Activated CD4-positive, alpha-beta T cell treated with anti-CD3 and anti-CD28 coated beads, Interleukin-2, amount 10 ng/mL, durations not matched to agents 7 days and 5 days (primary cell): ENCODE measurements at regions of chr22 and their contacts with region 1.

Region 1: GRCh38 chr22:22787786-22788459 is 99.7 kb upstream of the IGLL5 start:
- DNase-seq: peak; percentile 78
- H3K4me3 Mint-ChIP-seq: no peak overlapping the region
- H3K27ac Mint-ChIP-seq: no peak overlapping the region
- H3K4me1 Mint-ChIP-seq: peaks cover 41% of the 10 kb centered on the region
- H3K27me3 Mint-ChIP-seq: peaks cover 12% of the 10 kb centered on the region

Region 2: DNA sequence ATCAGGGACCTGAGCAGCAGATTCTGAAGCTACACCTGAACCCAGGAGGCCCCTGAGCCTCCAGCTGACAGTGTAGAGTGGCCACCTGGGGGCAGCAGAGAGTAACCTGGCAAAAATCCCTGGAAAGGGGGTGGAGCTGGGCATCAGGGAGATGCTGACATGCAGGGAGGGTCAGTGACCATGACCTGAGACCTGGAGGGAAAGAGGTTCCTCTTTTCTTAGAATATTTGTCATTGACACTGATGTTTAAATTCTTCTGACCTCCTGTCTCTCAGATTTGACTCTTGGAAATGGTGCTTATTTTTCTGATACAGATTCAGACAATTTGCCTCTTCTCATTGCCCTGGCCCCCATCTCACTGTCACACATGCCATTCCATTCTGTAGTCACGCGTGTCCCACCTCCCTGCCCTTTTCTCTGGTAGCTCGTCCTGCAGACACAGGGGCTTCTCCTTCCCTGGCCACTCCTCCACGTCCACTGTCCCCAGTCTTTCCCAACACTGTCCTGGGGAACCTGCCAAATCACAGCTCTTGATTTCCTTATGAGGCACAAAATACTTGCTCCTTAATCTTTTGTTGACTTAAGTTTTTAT is 17.5 kb before region 1 on chr22:
- CTCF ChIA-PET with region 1: interaction called, 11 read pairs
- POLR2A ChIA-PET with region 1: interaction called, 3 read pairs
- DNase-seq: peak; percentile 52
- H3K4me3 Mint-ChIP-seq: no peak overlapping the region
- H3K27ac Mint-ChIP-seq: no peak overlapping the region
- H3K4me1 Mint-ChIP-seq: no peaks in the 10 kb centered on the region
- H3K27me3 Mint-ChIP-seq: peaks cover 20% of the 10 kb centered on the region

Region 3: DNA sequence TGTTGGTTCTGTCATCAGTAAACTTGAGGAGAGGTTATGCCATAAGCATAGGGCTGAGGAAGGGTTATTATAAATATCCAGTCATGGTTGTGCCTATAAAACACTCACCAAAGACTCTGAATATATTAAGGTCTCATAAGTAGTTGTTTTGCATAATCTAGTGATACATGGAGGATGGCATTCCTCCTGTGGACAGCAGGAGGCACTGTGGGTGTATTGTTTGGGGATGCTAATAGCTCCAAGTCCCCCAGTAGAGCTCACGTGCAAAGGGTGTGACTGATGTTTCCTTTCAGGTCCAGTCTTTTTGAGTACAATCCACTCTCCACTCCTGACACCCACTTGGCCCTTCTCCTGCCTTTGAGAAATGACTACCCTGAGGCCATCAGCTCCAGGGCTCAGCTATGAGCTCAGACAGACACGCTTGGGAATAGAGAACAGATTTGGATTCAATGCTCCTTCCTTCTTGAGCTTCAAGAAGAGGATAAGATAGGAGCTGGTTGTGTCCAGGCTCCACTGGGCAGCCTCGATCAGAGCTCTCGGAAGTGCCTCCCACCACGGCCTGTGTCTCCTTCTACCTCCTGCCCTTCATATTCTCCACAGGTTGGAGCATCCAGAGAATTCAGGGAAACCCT is 14.5 kb after region 1 on chr22:
- CTCF ChIA-PET with region 1: interaction called, 10 read pairs
- POLR2A ChIA-PET with region 1: no interaction called
- DNase-seq: peak; percentile 79
- H3K4me3 Mint-ChIP-seq: no peak overlapping the region
- H3K27ac Mint-ChIP-seq: peak overlapping the region; percentile 73
- H3K4me1 Mint-ChIP-seq: peaks cover 41% of the 10 kb centered on the region
- H3K27me3 Mint-ChIP-seq: peaks cover 11% of the 10 kb centered on the region